GM18951 (cell line): ENCODE measurements at regions of chr4 and their contacts with region 1.

Region 1: DNA sequence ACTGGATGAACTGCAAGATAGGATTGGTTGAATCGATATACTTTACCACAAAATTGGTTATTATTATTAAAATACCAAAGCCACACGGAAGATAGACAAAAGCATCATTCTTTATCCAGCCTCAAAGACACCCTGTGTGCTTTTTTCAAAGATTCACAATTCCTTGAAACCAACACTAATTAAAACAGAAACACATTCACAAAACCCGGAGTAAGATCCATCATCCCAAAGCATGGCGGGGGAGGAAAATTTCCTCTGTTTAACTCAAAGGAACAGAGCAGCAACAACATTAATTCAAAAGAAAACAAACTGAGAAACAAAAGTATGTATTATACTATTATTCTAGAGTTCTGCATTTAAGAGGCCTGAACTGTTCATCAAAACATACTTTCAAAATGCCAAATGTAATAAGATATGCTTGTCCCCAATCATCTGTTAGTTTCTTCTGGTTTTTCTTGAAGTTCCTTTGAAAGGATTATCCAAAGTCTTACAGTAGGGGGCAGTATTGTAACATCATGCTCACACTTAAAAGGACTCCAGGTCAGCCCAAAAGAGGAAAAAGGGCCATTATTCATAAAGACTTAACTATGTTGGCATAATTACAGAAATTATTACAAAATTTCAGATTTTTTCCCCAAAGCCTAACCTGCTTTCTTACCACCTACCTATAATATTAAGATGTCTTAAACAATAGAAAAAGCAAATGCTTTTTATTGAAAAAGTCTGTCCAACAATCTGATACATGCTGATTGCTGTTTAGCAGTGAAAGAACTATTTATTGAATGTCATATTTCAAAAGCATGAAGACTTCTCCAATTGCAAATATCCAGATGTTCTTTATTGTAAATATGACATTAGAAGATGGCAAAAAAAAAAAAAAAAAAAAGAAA is 168.7 kb downstream of the SCFD2 start:
- POLR2A ChIP-seq: no peak

Region 2: DNA sequence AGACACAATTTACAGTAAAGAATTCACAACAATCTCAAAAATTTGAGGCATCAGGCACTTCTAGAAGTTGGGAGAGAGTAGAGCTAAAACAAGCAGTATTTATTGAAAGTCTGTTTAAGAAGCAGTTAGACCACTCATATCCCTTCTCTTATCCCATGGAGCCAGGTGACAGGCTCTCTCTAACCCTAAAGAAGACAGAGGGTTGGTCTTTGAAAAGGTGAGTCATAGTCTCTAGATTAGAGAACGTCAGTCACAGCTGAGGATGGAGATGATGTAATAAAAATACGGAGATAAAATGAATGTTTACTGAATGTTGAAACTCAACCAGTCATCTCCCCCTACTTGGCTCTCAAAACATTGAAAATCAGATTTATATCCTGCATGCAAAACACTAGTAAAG is 643.5 kb after region 1 on chr4:
- in situ Hi-C with region 1: loop called (anchors 25 kb)
- POLR2A ChIP-seq: no peak